Gastrocnemius medialis (tissue), 4 donors: ENCODE measurements at regions of chr12 and their contacts with region 1.

Region 1: GRCh38 chr12:42180990-42181596 is 36.4 kb upstream of the GXYLT1 start:
- DNase-seq: no peak
- ATAC-seq: peak; percentile 54 to 84
- H3K4me3 ChIP-seq: no peak overlapping the region
- H3K27ac ChIP-seq: peak overlapping the region in 3 of 4 donors; percentile 1 to 39 (median 11)
- H3K4me1 ChIP-seq: peaks cover 29 to 31% of the 10 kb centered on the region in 2 donors
- H3K27me3 ChIP-seq: no peaks in the 10 kb centered on the region
- CTCF ChIP-seq: no peak
- POLR2A ChIP-seq: no peak

Region 2: GRCh38 chr12:42144408-42145196 is 36.5 kb before region 1 on chr12 and contains the start of gene GXYLT1:
- in situ Hi-C with region 1: no loop called
- intact Hi-C with region 1: loop called (anchors 5 kb)
- DNase-seq: peak; percentile 80 to 90
- ATAC-seq: peak; percentile 87 to 90
- H3K4me3 ChIP-seq: peak within 1 kb of the TSS; percentile 52 to 83 (median 68)
- H3K27ac ChIP-seq: peak within 1 kb of the TSS; percentile 71 to 92 (median 88)
- H3K4me1 ChIP-seq: peaks cover 21 to 34% of the 10 kb centered on the region in 2 donors
- H3K27me3 ChIP-seq: no peaks in the 10 kb centered on the region
- CTCF ChIP-seq: no peak
- POLR2A ChIP-seq: peak; percentile 86 to 88
- total RNA-seq, gene GXYLT1: 4.4 to 5.5 (median 5.0) TPM

Region 3: GRCh38 chr12:42162193-42162592 is 18.9 kb before region 1 on chr12:
- in situ Hi-C with region 1: no loop called
- intact Hi-C with region 1: no loop called
- DNase-seq: no peak
- ATAC-seq: no peak
- H3K4me3 ChIP-seq: no peak overlapping the region
- H3K27ac ChIP-seq: no peak overlapping the region
- H3K4me1 ChIP-seq: peaks cover 0 to 5% of the 10 kb centered on the region in 2 donors
- H3K27me3 ChIP-seq: no peaks in the 10 kb centered on the region
- CTCF ChIP-seq: no peak
- POLR2A ChIP-seq: no peak